Heart left ventricle (tissue), 16 donors: ENCODE measurements at regions of chr2 and their contacts with region 1.

Region 1: GRCh38 chr2:17672583-17673317 is 80.9 kb downstream of the SMC6 start:
- DNase-seq: no peak
- ATAC-seq: no peak
- H3K4me3 ChIP-seq: no peak overlapping the region
- H3K27ac ChIP-seq: no peak overlapping the region
- H3K4me1 ChIP-seq: no peaks in the 10 kb centered on the region
- H3K27me3 ChIP-seq: no peaks in the 10 kb centered on the region
- CTCF ChIP-seq: no peak
- POLR2A ChIP-seq: no peak

Region 2: GRCh38 chr2:16773080-16773713 is 899.6 kb before region 1 on chr2:
- intact Hi-C with region 1: loop called (anchors 1 to 10 kb)
- DNase-seq: peak in 1 of 5 donors; percentile 12
- ATAC-seq: peak in 3 of 4 donors; percentile 62 to 80 (median 77)
- H3K4me3 ChIP-seq: no peak overlapping the region
- H3K27ac ChIP-seq: no peak overlapping the region
- H3K4me1 ChIP-seq: no peaks in the 10 kb centered on the region
- H3K27me3 ChIP-seq: peaks cover 0 to 10% (median 0%) of the 10 kb centered on the region in 9 donors
- CTCF ChIP-seq: peak; percentile 15 to 64 (median 54)
- POLR2A ChIP-seq: no peak

Region 3: GRCh38 chr2:17051538-17051937 is 621.2 kb before region 1 on chr2:
- intact Hi-C with region 1: loop called in 1 of 10 experiments (anchors 10 kb)
- DNase-seq: no peak
- ATAC-seq: no peak
- H3K4me3 ChIP-seq: no peak overlapping the region
- H3K27ac ChIP-seq: no peak overlapping the region
- H3K4me1 ChIP-seq: no peaks in the 10 kb centered on the region
- H3K27me3 ChIP-seq: no peaks in the 10 kb centered on the region
- CTCF ChIP-seq: no peak
- POLR2A ChIP-seq: no peak

Region 4: GRCh38 chr2:17309741-17310339 is 362.9 kb before region 1 on chr2:
- intact Hi-C with region 1: loop called in 1 of 10 experiments (anchors 10 kb)
- DNase-seq: peak in 1 of 5 donors; percentile 11
- ATAC-seq: peak in 3 of 4 donors; percentile 30 to 72 (median 45)
- H3K4me3 ChIP-seq: no peak overlapping the region
- H3K27ac ChIP-seq: no peak overlapping the region
- H3K4me1 ChIP-seq: no peaks in the 10 kb centered on the region
- H3K27me3 ChIP-seq: no peaks in the 10 kb centered on the region
- CTCF ChIP-seq: peak; percentile 44 to 72 (median 61)
- POLR2A ChIP-seq: no peak

Region 5: DNA sequence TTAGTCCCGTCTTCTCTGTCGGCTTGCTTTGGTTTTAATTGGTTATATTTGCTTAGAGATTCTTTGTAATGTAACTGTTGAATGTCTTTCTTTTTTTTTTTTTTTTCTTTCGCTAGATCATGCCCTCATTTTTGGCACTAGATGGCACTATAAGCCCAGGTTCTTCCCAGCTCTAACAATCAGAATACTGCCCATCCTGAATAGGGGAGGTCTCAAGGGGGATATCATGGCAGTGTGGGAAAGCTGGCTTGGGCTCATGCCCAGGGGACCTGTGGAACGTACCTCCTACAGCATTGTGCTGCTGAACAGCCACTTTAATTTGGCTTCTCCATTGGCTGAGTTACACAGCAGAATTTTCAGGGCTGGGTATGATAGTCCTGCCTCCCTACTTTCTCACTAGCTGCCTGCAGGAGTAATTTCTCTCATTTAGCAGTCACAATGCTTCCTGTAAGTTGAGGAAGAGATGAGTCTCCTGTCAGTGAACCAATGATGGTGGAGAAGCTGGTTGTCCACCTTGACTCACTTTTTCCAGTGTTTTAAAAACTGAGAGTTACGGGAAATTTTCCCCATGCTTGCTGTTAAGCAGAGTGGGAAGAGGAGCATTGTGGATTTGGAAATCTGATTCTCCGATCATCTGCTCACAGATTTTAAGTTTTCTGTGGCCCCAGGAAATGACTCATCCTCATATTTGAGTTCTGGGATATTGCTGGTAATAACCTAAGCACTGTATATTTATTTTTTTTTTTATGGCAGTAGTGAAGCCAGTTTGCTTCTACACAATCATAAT is 201.7 kb before region 1 on chr2:
- intact Hi-C with region 1: loop called in 3 of 10 experiments (anchors 5 to 10 kb)
- DNase-seq: no peak
- ATAC-seq: peak in 1 of 4 donors; percentile 44
- H3K4me3 ChIP-seq: no peak overlapping the region
- H3K27ac ChIP-seq: no peak overlapping the region
- H3K4me1 ChIP-seq: no peaks in the 10 kb centered on the region
- H3K27me3 ChIP-seq: no peaks in the 10 kb centered on the region
- CTCF ChIP-seq: peak in 6 of 12 donors; percentile 10 to 30 (median 19)
- POLR2A ChIP-seq: no peak